ENCODE measurements at regions of chr18 and their contacts with region 1.

Region 1: GRCh38 chr18:13268158-13269012 is 49.8 kb downstream of the LDLRAD4 start:
- DNase-seq: no peak
- H3K4me3 Mint-ChIP-seq: no peak overlapping the region
- H3K27ac Mint-ChIP-seq: no peak overlapping the region
- H3K4me1 Mint-ChIP-seq: peaks cover 71% of the 10 kb centered on the region
- H3K27me3 Mint-ChIP-seq: no peaks in the 10 kb centered on the region

Region 2: GRCh38 chr18:13279181-13280069 is 11.0 kb after region 1 on chr18:
- CTCF ChIA-PET with region 1: interaction called, 12 read pairs
- intact Hi-C with region 1: loop called (anchors 1 kb)
- DNase-seq: peak; percentile 51
- H3K4me3 Mint-ChIP-seq: peak overlapping the region; percentile 63
- H3K27ac Mint-ChIP-seq: peak overlapping the region; percentile 63
- H3K4me1 Mint-ChIP-seq: peaks cover 66% of the 10 kb centered on the region
- H3K27me3 Mint-ChIP-seq: no peaks in the 10 kb centered on the region

Region 3: GRCh38 chr18:13289481-13290205 is 21.3 kb after region 1 on chr18:
- CTCF ChIA-PET with region 1: no interaction called
- intact Hi-C with region 1: loop called (anchors 1 kb)
- DNase-seq: no peak
- H3K4me3 Mint-ChIP-seq: no peak overlapping the region
- H3K27ac Mint-ChIP-seq: no peak overlapping the region
- H3K4me1 Mint-ChIP-seq: peaks cover 24% of the 10 kb centered on the region
- H3K27me3 Mint-ChIP-seq: no peaks in the 10 kb centered on the region

Region 4: GRCh38 chr18:13455960-13456471 is 187.6 kb after region 1 on chr18:
- CTCF ChIA-PET with region 1: no interaction called
- intact Hi-C with region 1: loop called (anchors 1 kb)
- DNase-seq: peak; percentile 85
- H3K4me3 Mint-ChIP-seq: peak overlapping the region; percentile 33
- H3K27ac Mint-ChIP-seq: no peak overlapping the region
- H3K4me1 Mint-ChIP-seq: peaks cover 25% of the 10 kb centered on the region
- H3K27me3 Mint-ChIP-seq: no peaks in the 10 kb centered on the region